Naive thymus-derived CD8-positive, alpha-beta T cell (primary cell): ENCODE measurements at regions of chr6 and their contacts with region 1.

Region 1: GRCh38 chr6:33154349-33154748 is 37.9 kb downstream of the COL11A2 start:
- DNase-seq: no peak
- ATAC-seq: no peak
- H3K4me3 Mint-ChIP-seq: no peak overlapping the region
- H3K27ac Mint-ChIP-seq: no peak overlapping the region
- H3K4me1 Mint-ChIP-seq: no peaks in the 10 kb centered on the region
- H3K27me3 Mint-ChIP-seq: peaks cover 0 to 22% (median 8%) of the 10 kb centered on the region in 5 donors

Region 2: GRCh38 chr6:34205466-34205865 is 1051.1 kb after region 1 on chr6:
- POLR2A ChIA-PET with region 1: interaction called, 10 read pairs
- DNase-seq: no peak
- ATAC-seq: no peak
- H3K4me3 Mint-ChIP-seq: no peak overlapping the region
- H3K27ac Mint-ChIP-seq: peak overlapping the region in 3 of 10 donors; percentile 26 to 52 (median 38)
- H3K4me1 Mint-ChIP-seq: peaks cover 6 to 11% (median 7%) of the 10 kb centered on the region in 4 donors
- H3K27me3 Mint-ChIP-seq: no peaks in the 10 kb centered on the region